ENCODE measurements at regions of chr20 and their contacts with region 1.

Region 1: GRCh38 chr20:11267131-11267761 is 593.4 kb upstream of the JAG1 start:
- DNase-seq: peak; percentile 96
- ATAC-seq: peak; percentile 90
- H3K4me3 ChIP-seq: peak overlapping the region; percentile 50; the same call in 1 of the 2 replicates
- H3K27ac ChIP-seq: peak overlapping the region; percentile 93
- H3K4me1 ChIP-seq: peaks cover 27% of the 10 kb centered on the region
- H3K27me3 ChIP-seq: no peaks in the 10 kb centered on the region
- CTCF ChIP-seq: no peak

Region 2: DNA sequence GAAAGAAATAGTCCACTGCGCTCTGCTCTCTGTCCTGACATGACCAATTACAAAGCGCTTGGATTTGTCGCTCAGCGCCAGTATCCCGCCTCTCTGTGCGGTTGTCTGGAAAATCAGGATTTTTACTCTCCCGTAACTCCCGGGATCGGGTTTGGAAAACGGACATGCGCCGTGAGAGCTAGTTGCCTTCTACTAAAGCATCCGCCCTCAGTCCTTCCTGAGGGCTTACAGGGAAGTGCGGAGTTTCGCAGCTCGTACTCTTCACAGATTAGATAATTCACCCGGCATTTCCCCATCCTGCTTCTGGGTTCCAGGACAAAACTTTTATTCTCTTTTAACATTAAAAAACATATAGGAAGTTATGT is 832.8 kb before region 1 on chr20:
- CTCF ChIA-PET with region 1: no interaction called
- POLR2A ChIA-PET with region 1: no interaction called
- intact Hi-C with region 1: loop called (anchors 5 kb)
- DNase-seq: peak; percentile 99
- ATAC-seq: peak; percentile 76
- H3K4me3 ChIP-seq: peak overlapping the region; percentile 73
- H3K27ac ChIP-seq: peak overlapping the region; percentile 79
- H3K4me1 ChIP-seq: peaks cover 42% of the 10 kb centered on the region
- H3K27me3 ChIP-seq: no peaks in the 10 kb centered on the region
- CTCF ChIP-seq: no peak

Region 3: GRCh38 chr20:11001767-11002540 is 265.3 kb before region 1 on chr20:
- CTCF ChIA-PET with region 1: no interaction called
- POLR2A ChIA-PET with region 1: no interaction called
- intact Hi-C with region 1: loop called (anchors 10 kb)
- DNase-seq: peak; percentile 99
- ATAC-seq: peak; percentile 99
- H3K4me3 ChIP-seq: 0 out of 2 replicates have a peak overlapping the region, but pooled peaks have one; percentile 7
- H3K27ac ChIP-seq: peak overlapping the region; percentile 93
- H3K4me1 ChIP-seq: peaks cover 24% of the 10 kb centered on the region
- H3K27me3 ChIP-seq: no peaks in the 10 kb centered on the region
- CTCF ChIP-seq: no peak

Region 4: GRCh38 chr20:11153819-11154218 is 113.4 kb before region 1 on chr20:
- CTCF ChIA-PET with region 1: no interaction called
- POLR2A ChIA-PET with region 1: no interaction called
- intact Hi-C with region 1: loop called (anchors 2 kb)
- DNase-seq: peak; percentile 82
- ATAC-seq: peak; percentile 70
- H3K4me3 ChIP-seq: no peak overlapping the region
- H3K27ac ChIP-seq: peak overlapping the region; percentile 63
- H3K4me1 ChIP-seq: peaks cover 49% of the 10 kb centered on the region
- H3K27me3 ChIP-seq: no peaks in the 10 kb centered on the region
- CTCF ChIP-seq: no peak

Region 5: DNA sequence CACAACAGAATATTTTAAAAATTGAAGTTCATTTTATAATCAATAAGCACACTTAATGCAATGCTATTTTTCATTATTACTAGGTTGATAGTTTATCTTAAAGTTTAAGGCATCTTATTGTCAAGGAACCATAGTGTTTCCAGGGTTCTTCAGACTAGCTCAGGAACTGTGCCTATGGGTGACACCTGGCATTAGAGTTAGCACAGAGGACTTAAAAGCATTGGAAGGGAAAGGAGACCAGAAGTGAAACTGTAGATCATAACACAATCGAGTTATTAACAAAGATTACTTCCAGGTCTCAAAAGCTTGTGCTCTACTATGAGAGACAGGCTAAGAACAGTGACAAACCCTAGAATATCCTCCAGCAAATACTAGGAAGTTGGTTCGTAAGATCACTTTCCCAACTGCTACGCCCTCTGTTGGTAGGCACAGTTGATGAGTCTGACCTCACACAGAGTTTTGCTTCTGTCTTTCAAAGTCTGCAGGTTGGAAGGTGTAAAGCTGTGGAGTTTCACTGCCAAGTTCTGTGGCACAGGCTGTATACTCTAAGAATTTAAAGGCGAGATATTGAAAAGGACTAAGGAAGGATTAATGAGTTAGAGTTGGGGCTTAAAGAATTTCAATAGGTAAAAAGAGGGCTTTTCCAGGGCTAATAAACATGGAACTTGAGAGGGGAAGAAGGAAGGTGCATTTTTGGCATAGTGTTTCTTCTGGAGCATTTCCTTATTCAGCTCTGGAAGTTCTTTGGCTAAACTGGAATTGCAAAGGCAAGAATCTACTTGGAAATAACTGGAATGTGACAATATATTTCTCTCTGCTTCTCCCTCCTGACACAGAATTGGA is 62.1 kb before region 1 on chr20:
- CTCF ChIA-PET with region 1: interaction called, 4 read pairs
- POLR2A ChIA-PET with region 1: no interaction called
- intact Hi-C with region 1: loop called (anchors 2 kb)
- DNase-seq: peak; percentile 84
- ATAC-seq: peak; percentile 42
- H3K4me3 ChIP-seq: no peak overlapping the region
- H3K27ac ChIP-seq: no peak overlapping the region
- H3K4me1 ChIP-seq: peaks cover 51% of the 10 kb centered on the region
- H3K27me3 ChIP-seq: no peaks in the 10 kb centered on the region
- CTCF ChIP-seq: peak; percentile 96

Region 6: GRCh38 chr20:11229772-11230171 is 37.5 kb before region 1 on chr20:
- CTCF ChIA-PET with region 1: no interaction called
- POLR2A ChIA-PET with region 1: interaction called, 16 read pairs
- intact Hi-C with region 1: no loop called
- DNase-seq: peak; percentile 82
- ATAC-seq: peak; percentile 91
- H3K4me3 ChIP-seq: no peak overlapping the region
- H3K27ac ChIP-seq: peak overlapping the region; percentile 47
- H3K4me1 ChIP-seq: peaks cover 15% of the 10 kb centered on the region
- H3K27me3 ChIP-seq: no peaks in the 10 kb centered on the region
- CTCF ChIP-seq: no peak

Region 7: GRCh38 chr20:11599592-11599991 is 332.3 kb after region 1 on chr20:
- CTCF ChIA-PET with region 1: no interaction called
- POLR2A ChIA-PET with region 1: no interaction called
- intact Hi-C with region 1: no loop called
- DNase-seq: no peak
- ATAC-seq: no peak
- H3K4me3 ChIP-seq: no peak overlapping the region
- H3K27ac ChIP-seq: no peak overlapping the region
- H3K4me1 ChIP-seq: no peaks in the 10 kb centered on the region
- H3K27me3 ChIP-seq: peaks cover 74% of the 10 kb centered on the region
- CTCF ChIP-seq: no peak